ENCODE measurements at regions of chr19 and their contacts with region 1.

Region 1: DNA sequence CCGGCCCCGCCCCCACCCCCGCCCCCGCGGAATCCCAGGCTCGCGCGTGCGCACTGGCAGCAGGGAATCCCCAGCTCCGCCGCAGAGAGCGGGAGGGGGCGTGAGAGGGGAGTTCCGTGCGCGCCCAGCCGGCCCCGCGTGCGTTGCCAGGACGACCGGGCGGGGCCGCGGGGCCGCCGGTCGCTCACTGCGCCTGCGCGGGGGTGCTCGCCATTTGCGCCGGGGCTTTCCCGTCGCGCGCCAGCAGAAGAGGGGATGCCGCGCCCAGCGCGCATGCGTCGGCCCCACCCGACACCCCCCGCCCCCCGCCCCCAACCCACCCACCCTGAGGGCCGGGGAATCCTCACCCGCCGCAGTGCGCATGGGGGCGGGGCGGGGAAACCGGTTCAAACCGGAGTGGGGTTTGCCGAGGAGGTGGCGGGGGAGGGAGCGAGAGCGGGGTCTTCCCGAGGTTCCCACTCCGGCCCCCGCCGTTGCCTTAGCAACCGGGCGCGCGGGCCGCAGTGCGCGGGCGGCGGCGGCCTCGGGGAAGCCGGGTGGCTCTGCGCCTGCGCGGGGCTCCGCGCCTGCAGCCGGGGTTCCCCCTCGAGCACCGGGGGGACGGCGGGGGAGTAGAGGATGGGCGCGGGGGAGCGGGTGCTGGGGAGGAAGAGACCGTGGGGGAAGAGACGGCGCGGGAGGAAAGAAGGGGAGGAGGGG is 15.1 kb downstream of the CCDC124 start:
- DNase-seq: peak; percentile 95
- H3K4me3 ChIP-seq: peak overlapping the region; percentile 71 to 96 (median 94)
- H3K27ac ChIP-seq: peak overlapping the region; percentile 66 to 72 (median 70)
- H3K4me1 ChIP-seq: peaks cover 0 to 66% (median 62%) of the 10 kb centered on the region in 4 donors
- H3K27me3 ChIP-seq: peaks cover 31 to 46% (median 40%) of the 10 kb centered on the region in 3 donors
- CTCF ChIP-seq: no peak
- EP300 ChIP-seq: no peak
- POLR2A ChIP-seq: no peak

Region 2: GRCh38 chr19:17932485-17933338 is 15.3 kb before region 1 on chr19 and contains the start of gene CCDC124:
- intact Hi-C with region 1: loop called (anchors 2 kb)
- DNase-seq: peak; percentile 94
- H3K4me3 ChIP-seq: peak within 1 kb of the TSS; percentile 59 to 98 (median 88)
- H3K27ac ChIP-seq: peak within 1 kb of the TSS; percentile 77 to 88 (median 84)
- H3K4me1 ChIP-seq: peaks cover 0 to 23% (median 21%) of the 10 kb centered on the region in 4 donors
- H3K27me3 ChIP-seq: no peaks in the 10 kb centered on the region
- CTCF ChIP-seq: peak; percentile 70 to 90 (median 77)
- EP300 ChIP-seq: peak in 1 of 4 donors; percentile 1
- POLR2A ChIP-seq: peak; percentile 84 to 90
- total RNA-seq, gene CCDC124: 52.8 to 86.4 (median 73.1) TPM

Region 3: DNA sequence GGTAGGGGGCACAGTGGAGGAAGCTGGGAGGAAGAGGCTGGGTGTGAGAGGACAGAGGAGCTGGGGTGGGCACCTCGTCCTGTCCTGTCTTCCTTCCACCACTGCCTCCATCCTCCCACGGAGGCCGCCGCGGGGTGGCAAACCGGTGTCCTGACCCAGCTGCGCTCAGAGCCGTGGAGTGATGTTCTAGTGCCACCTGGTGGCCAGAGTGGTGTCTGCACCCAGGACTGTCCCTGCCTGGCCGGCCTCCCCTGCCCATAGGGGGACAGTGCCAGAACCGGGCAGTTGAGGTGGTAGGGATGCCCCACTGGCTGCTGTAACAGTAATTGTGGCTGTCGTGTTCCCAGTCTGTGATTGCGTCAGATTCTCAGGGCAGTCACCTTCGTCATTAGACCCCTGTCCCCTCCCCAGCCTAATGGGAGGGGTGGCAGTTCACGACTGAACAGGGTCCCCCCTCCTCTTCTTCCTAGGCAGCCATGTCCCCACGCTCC is 48.9 kb after region 1 on chr19:
- intact Hi-C with region 1: loop called (anchors 2 kb)
- DNase-seq: peak; percentile 92
- H3K4me3 ChIP-seq: no peak overlapping the region
- H3K27ac ChIP-seq: no peak overlapping the region
- H3K4me1 ChIP-seq: peaks cover 0 to 12% (median 11%) of the 10 kb centered on the region in 4 donors
- H3K27me3 ChIP-seq: no peaks in the 10 kb centered on the region
- CTCF ChIP-seq: peak; percentile 96 to 98 (median 97)
- EP300 ChIP-seq: no peak
- POLR2A ChIP-seq: no peak

Measured in sigmoid colon (tissue), 7 donors.